ENCODE measurements at regions of chr7 and their contacts with region 1.

Region 1: DNA sequence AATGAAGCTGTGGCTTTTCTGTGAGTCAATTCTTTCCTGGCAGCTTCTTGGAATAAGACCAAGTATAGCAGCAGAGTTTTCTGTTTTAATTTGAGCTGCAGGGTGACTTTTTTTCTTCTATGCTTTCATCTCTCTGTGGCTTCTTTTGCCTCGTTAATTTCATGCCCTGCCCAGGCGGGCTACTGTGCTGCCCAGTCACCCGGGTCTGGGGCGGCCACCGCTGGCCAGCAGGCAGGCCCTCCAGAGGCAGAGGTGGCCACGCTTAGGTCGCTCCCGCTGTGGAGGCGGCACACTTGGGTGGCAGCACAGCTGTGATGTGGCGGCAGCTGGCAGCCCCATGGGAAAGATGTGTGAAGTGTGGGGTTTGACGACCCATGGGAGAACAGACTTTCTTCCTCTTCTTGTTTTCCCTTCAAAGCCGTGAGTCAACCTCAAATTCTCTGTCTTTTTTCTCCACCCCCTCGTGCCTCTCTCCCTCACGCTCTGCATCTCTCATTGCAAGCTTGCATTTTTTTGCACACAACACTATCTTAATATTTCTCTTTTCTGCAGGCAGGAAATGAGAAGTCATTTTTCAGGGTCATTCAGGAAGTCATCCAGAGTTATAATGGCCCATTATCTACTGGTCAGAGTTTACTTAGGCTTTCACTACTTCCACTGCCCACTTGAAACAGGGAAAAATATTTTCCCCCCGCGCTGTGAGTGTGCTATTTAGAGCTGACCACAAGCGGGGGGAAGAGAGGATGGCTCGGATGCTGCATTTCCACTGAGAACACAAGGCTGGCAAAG is 67.8 kb downstream of the EGFR start:
- DNase-seq: peak; percentile 78
- ATAC-seq: peak; percentile 84
- H3K4me3 ChIP-seq: peak overlapping the region; percentile 63
- H3K27ac ChIP-seq: peak overlapping the region; percentile 99
- H3K4me1 ChIP-seq: peaks cover 44% of the 10 kb centered on the region
- H3K27me3 ChIP-seq: no peaks in the 10 kb centered on the region
- CTCF ChIP-seq: no peak

Region 2: GRCh38 chr7:54796853-54797252 is 289.8 kb before region 1 on chr7:
- CTCF ChIA-PET with region 1: interaction called, 13 read pairs
- POLR2A ChIA-PET with region 1: no interaction called
- intact Hi-C with region 1: no loop called
- DNase-seq: no peak
- ATAC-seq: no peak
- H3K4me3 ChIP-seq: no peak overlapping the region
- H3K27ac ChIP-seq: no peak overlapping the region
- H3K4me1 ChIP-seq: no peaks in the 10 kb centered on the region
- H3K27me3 ChIP-seq: no peaks in the 10 kb centered on the region
- CTCF ChIP-seq: no peak

Region 3: GRCh38 chr7:54921116-54921515 is 165.5 kb before region 1 on chr7:
- CTCF ChIA-PET with region 1: no interaction called
- POLR2A ChIA-PET with region 1: no interaction called
- intact Hi-C with region 1: no loop called
- DNase-seq: no peak
- ATAC-seq: no peak
- H3K4me3 ChIP-seq: no peak overlapping the region
- H3K27ac ChIP-seq: no peak overlapping the region
- H3K4me1 ChIP-seq: no peaks in the 10 kb centered on the region
- H3K27me3 ChIP-seq: no peaks in the 10 kb centered on the region
- CTCF ChIP-seq: no peak

Region 4: GRCh38 chr7:55018361-55019190 is 68.0 kb before region 1 on chr7 and contains the start of gene EGFR:
- CTCF ChIA-PET with region 1: no interaction called
- POLR2A ChIA-PET with region 1: interaction called, 11 read pairs
- intact Hi-C with region 1: no loop called
- DNase-seq: peak; percentile 76
- ATAC-seq: peak; percentile 80
- H3K4me3 ChIP-seq: peak within 1 kb of the TSS; percentile 90
- H3K27ac ChIP-seq: peak within 1 kb of the TSS; percentile 69
- H3K4me1 ChIP-seq: peaks cover 27% of the 10 kb centered on the region
- H3K27me3 ChIP-seq: no peaks in the 10 kb centered on the region
- CTCF ChIP-seq: no peak
- total RNA-seq, gene EGFR: 50.0 and 64.6 TPM in 2 replicates

Region 5: DNA sequence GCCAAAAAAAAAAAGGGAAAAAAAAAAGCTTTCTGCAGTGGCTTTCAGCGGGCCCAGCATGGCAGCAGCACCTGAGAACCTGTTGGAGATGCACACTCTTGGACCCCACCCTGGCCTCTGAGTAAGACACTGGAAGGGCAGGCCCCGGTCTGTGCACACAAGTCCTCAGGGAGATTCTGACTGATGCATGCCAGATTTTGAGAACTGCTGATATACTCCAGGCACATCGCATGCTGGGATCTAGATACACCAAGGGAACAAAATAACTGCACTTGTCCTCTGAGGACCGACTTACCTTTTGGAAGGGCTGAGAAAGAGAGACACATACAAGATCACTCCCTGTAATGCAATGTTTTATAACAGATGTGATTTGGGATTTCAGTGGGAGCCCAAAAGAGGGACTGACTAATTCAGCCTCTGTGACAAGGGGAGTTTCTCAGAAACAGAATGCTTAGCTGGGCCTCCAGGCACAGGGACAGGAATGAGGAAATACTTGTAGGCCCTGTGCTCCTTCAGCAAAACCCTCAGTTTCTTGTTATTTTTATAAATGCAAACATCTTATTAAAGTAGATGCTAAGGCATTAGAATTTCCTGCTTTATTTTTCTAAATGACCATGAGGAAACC is 59.6 kb before region 1 on chr7:
- CTCF ChIA-PET with region 1: no interaction called
- POLR2A ChIA-PET with region 1: no interaction called
- intact Hi-C with region 1: loop called (anchors 2 kb)
- DNase-seq: no peak
- ATAC-seq: peak; percentile 25; the same call in 1 of the 2 replicates
- H3K4me3 ChIP-seq: no peak overlapping the region
- H3K27ac ChIP-seq: 0 out of 2 replicates have a peak overlapping the region, but pooled peaks have one; percentile 2
- H3K4me1 ChIP-seq: peaks cover 53% of the 10 kb centered on the region
- H3K27me3 ChIP-seq: no peaks in the 10 kb centered on the region
- CTCF ChIP-seq: no peak

Region 6: DNA sequence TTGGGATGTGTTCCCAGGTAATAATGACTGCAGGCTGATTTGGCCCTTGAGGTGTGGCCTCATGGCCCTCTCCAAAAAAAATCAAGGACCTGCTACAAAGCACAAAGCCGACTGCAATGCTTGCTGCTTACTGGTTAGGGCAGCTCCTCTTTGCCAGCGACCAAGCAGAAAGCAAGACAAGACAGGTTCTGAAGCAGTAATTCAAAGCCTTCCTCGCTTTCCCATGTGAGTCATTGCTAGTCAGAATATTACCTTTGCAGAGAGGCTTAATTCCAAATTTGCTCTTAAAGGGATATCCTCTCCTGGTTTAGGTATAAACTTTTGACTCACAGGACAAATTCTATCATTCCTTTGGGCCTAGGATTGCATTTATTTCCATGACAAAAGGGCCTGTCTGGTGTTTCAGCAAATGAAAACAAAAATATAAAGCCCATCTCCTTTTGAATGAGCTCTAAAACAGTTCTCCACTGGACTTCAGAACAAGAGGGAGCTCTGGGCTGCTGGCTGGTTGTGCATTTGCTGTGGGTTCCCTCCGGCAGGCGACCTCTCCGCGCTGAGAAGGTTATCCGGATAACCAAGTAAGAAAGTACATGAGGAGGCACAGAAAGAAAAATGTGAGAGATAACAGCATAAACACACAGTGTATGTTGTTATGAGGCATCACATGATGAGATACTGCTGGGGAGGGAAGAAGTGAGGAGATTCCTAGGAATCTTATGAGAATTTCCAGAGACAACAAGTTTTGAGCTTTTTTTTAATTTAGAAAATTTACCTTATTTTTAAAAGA is 23.0 kb after region 1 on chr7:
- CTCF ChIA-PET with region 1: interaction called, 3 read pairs
- POLR2A ChIA-PET with region 1: interaction called, 6 read pairs
- intact Hi-C with region 1: loop called (anchors 1 kb)
- DNase-seq: peak; percentile 91
- ATAC-seq: peak; percentile 87
- H3K4me3 ChIP-seq: peak overlapping the region; percentile 28; the same call in 1 of the 2 replicates
- H3K27ac ChIP-seq: peak overlapping the region; percentile 91
- H3K4me1 ChIP-seq: peaks cover 42% of the 10 kb centered on the region
- H3K27me3 ChIP-seq: no peaks in the 10 kb centered on the region
- CTCF ChIP-seq: no peak